ENCODE measurements at regions of chr11 and their contacts with region 1.

Region 1: DNA sequence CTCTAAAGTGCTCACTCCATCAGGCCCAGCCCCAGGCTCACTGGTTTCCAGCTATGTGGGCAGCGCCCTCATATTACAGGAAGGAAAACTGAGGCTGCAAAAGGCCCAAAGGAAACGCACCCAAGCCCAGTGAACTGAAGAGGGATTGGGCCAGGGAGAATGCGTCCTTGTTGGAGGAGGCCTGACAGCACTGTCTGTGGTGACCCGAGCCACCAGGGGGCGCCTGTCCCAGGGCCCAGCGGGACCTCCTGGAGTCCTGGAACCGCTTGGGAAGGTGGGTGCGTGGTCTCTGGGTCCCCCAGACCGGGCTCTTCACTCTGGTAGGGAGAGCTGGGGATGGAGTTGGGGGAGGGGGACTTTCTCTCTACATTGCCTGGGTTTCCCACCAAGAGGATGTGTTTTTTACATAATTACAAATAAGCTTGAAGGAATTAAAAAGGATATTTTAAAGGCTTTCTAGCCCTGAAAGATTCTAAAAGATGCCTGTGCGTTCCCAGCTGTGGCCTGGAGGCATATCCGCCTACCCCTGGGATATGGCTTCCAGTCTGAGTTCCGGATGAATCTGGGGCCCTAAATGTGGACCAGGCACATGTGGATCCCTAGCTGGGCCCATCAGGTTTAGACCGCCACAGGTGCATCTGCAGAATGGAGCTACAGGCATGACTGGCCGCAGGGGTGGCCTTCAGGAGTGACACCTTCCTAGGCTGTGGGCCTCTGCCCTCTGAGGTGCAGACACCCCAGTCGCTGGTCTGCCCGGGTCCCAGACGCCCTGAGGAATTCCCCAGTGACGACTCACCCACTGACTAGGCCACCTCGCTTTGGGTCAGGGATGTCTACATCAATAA is 4.2 kb downstream of the SPI1 start:
- DNase-seq: peak; percentile 89
- H3K4me3 Mint-ChIP-seq: no peak overlapping the region
- H3K27ac Mint-ChIP-seq: no peak overlapping the region
- H3K4me1 Mint-ChIP-seq: no peaks in the 10 kb centered on the region
- H3K27me3 Mint-ChIP-seq: peaks cover 11% of the 10 kb centered on the region
- CTCF ChIP-seq: peak; percentile 91

Region 2: DNA sequence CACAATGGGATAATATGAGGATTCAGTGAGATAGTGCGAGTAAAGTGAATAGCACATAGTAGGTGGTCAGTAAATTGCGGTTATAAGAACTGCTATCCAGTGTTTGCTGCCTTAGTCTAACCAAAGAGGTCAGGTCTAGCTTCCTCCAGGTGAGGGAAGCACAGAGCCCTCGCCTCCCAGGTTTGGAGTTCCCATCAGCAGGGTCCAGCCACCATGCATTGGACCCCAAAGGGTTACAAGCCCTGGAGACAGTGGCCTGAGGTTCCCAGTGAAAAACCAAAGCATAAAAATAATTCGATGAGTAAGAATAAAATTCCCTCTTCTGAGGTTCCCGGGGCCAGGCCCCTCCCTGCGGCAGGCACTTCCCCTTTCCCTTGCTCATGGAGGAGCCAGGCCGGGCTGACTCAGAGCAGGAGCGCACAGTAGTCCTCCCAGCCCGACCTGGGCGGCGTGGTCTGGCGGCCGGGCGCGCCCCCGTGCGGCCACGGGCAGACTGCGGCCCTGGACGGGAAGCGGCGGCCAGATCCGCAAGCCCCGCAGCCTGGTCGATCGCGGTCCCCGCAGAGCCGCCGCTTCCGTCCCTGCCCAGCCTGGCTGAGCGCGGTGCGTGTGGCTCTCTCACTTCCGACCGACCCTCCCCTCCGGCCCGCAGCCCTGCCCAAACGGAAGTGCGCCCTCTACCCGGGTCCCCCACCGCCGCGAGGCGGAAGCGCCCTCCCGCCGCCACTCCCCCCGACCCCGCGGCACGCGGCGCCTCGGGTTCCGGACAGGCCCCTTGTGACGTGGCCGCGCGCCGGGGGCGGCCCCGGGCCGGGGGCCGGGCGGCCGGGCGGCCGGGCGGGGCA is 33.9 kb after region 1 on chr11 and contains the start of gene SLC39A13:
- CTCF ChIA-PET with region 1: interaction called, 5 read pairs
- intact Hi-C with region 1: loop called (anchors 5 kb)
- DNase-seq: peak; percentile 96
- H3K4me3 Mint-ChIP-seq: peak within 1 kb of the TSS; percentile 82
- H3K27ac Mint-ChIP-seq: peak within 1 kb of the TSS; percentile 69
- H3K4me1 Mint-ChIP-seq: peaks cover 9% of the 10 kb centered on the region
- H3K27me3 Mint-ChIP-seq: no peaks in the 10 kb centered on the region
- CTCF ChIP-seq: peak; percentile 82
- total RNA-seq, gene SLC39A13: 23.8 and 24.3 TPM in 2 replicates

Region 3: GRCh38 chr11:47454180-47454644 is 80.1 kb after region 1 on chr11:
- CTCF ChIA-PET with region 1: no interaction called
- intact Hi-C with region 1: loop called (anchors 5 kb)
- DNase-seq: peak; percentile 73
- H3K4me3 Mint-ChIP-seq: no peak overlapping the region
- H3K27ac Mint-ChIP-seq: no peak overlapping the region
- H3K4me1 Mint-ChIP-seq: no peaks in the 10 kb centered on the region
- H3K27me3 Mint-ChIP-seq: no peaks in the 10 kb centered on the region
- CTCF ChIP-seq: no peak

Measured in Calu3 (cell line).